PC-9 (cell line): ENCODE measurements at regions of chr9 and their contacts with region 1.

Region 1: DNA sequence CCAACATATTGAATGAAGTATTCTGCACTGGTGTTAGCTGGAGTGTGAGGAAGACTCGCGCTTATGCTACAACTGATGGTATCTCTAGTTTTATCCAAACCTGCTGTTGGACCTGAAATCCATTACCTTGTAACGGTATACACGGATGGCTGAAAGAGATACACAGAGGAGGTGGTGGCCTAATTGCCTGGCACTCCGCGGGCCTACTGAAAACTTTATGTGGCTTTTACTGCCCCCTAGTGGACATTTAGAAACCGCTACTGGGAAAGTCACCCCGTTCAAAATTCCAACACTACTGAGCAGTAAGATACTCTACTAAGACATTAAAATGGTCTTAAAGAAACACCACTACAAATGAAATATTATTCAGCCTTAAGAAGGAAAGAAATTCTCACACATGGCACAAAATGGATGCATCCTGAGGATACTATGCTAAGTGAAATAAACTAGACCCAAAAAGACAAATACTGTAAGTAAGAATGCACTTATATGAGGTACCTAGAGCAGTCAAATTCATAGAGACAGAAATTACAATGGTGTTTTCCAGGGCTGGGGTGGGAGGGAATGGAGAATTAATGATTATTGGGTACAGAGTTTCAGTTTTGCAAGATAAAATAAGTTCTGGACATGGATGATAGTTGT is 100.4 kb downstream of the TTLL11 start:
- DNase-seq: peak; percentile 55
- H3K4me3 ChIP-seq: no peak overlapping the region
- H3K27ac ChIP-seq: no peak overlapping the region
- H3K4me1 ChIP-seq: no peaks in the 10 kb centered on the region
- H3K27me3 ChIP-seq: no peaks in the 10 kb centered on the region
- CTCF ChIP-seq: peak; percentile 88

Region 2: GRCh38 chr9:121621113-121621449 is 371.6 kb before region 1 on chr9:
- CTCF ChIA-PET with region 1: no interaction called
- POLR2A ChIA-PET with region 1: no interaction called
- intact Hi-C with region 1: loop called (anchors 5 kb)
- DNase-seq: peak in 1 of 2 experiments; percentile 39
- H3K4me3 ChIP-seq: no peak overlapping the region
- H3K27ac ChIP-seq: no peak overlapping the region
- H3K4me1 ChIP-seq: no peaks in the 10 kb centered on the region
- H3K27me3 ChIP-seq: no peaks in the 10 kb centered on the region
- CTCF ChIP-seq: peak; percentile 59

Region 3: DNA sequence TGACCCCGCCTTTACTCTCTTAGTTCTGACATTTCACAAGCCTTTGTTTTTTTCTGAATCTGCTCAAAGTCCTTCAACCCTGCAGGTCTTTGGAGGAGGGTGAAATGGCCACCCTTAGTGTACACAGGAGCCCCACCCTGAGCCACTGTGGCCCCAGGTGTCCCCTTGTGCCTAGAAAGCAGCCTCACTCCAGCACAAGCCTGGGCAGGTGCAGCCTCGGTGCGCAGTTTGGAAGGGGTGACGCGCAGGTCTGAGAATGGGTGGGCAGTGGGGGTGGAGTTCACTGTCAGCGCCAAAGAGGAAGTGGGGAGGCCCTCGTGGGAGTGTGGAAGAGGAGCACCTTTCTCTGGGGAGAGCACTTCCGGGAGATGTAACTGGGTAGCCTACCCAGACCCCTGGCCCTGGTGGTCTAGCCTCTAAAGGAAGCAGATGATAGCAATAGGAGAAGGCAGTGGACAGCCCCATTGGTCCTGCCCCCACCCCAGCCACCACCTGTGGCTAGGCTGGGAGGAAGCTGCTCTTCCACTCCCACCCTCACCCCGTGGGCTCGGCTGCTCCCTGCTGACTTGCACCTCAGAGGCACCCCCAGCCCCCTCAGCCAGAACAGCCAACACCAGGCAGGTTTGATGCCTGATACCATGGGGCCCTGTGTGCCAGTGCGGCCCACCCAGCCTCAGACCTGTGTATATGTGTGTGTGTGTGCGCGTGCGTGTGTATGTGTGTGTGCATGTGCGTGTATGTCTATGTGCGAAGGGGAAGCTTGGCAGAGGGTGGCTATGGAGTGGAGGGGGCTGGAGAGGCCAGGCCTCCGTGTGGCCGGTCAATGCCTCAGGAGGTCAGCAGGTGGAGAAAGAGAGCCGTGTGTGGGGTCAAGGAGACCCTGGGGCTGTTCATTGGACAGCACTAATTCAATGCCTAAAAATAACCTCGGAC is 358.1 kb before region 1 on chr9:
- CTCF ChIA-PET with region 1: no interaction called
- POLR2A ChIA-PET with region 1: no interaction called
- intact Hi-C with region 1: loop called (anchors 2 kb)
- DNase-seq: peak in 1 of 2 experiments; percentile 39
- H3K4me3 ChIP-seq: no peak overlapping the region
- H3K27ac ChIP-seq: no peak overlapping the region
- H3K4me1 ChIP-seq: peaks cover 9% of the 10 kb centered on the region; the same call in 1 of the 2 replicates
- H3K27me3 ChIP-seq: no peaks in the 10 kb centered on the region
- CTCF ChIP-seq: peak; percentile 60

Region 4: DNA sequence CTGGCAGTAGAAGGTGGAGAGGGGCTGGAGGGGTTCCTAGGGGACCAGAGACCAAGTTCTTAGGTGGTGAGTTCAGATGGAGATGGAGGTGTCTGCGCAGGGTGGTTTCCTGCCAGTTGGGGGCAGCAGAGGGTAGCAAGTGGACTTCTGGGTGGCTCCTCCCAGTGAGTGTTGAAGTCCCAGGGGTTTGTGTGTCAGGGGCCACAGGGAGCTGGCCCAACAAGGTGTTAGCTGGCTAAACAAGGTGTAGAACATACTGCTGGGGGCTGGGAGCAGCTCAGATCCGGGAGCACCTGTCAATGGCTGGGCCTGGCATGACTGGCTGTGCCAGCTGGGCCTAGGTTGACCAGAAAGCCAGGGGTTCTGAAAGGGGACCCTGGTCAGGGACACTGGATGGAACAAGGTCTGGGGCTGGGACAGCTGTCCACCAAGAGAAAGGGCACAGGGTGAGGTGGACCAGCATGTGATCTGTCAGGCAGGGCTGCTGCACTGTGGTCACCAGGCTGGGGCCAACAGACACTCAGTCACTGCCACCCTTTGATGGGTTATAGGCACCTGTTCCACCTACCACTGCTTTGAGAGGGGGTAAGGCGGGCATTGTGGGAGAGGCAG is 305.7 kb before region 1 on chr9:
- CTCF ChIA-PET with region 1: no interaction called
- POLR2A ChIA-PET with region 1: no interaction called
- intact Hi-C with region 1: loop called (anchors 1 kb)
- DNase-seq: peak; percentile 78 to 87
- H3K4me3 ChIP-seq: no peak overlapping the region
- H3K27ac ChIP-seq: no peak overlapping the region
- H3K4me1 ChIP-seq: peaks cover 9% of the 10 kb centered on the region
- H3K27me3 ChIP-seq: no peaks in the 10 kb centered on the region
- CTCF ChIP-seq: peak; percentile 93

Region 5: DNA sequence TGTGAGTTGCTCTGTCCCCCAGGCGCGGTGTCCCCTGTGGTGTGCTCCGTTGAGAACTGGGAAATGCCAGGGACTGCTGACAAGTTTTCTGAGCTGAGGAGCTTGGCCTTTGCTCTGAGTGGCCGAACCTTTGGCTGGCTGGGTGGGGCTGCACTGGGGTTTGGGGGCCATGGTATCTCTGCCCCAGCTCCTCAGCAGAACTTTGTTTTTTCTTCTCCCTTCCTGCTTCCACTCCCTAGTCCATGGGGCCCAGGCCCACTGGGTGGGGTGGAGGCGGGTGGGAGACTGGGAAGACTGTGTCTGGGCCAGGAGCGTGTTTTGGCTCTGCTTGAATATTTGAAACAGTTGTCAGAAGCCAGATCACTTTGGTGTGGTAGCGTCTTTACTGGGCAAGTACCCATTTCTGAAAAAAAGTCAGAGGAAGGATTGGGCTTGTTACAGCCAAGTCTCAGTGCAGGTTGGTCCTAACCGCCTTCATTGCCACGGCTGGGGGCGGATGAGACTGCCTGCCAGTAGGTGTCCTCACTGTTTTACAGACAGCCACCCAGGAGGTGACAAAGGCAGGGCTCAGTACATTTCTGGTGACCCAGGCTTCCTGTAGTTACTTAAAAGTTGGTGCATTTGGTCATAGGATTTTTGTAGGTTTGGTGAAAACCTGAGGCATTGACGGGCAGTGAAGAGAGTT is 248.5 kb before region 1 on chr9:
- CTCF ChIA-PET with region 1: no interaction called
- POLR2A ChIA-PET with region 1: no interaction called
- intact Hi-C with region 1: loop called (anchors 1 kb)
- DNase-seq: peak in 1 of 2 experiments; percentile 67
- H3K4me3 ChIP-seq: peak overlapping the region; percentile 42; the same call in 1 of the 2 replicates
- H3K27ac ChIP-seq: no peak overlapping the region
- H3K4me1 ChIP-seq: peaks cover 50% of the 10 kb centered on the region
- H3K27me3 ChIP-seq: no peaks in the 10 kb centered on the region
- CTCF ChIP-seq: peak; percentile 56; the same call in 1 of the 2 replicates

Region 6: DNA sequence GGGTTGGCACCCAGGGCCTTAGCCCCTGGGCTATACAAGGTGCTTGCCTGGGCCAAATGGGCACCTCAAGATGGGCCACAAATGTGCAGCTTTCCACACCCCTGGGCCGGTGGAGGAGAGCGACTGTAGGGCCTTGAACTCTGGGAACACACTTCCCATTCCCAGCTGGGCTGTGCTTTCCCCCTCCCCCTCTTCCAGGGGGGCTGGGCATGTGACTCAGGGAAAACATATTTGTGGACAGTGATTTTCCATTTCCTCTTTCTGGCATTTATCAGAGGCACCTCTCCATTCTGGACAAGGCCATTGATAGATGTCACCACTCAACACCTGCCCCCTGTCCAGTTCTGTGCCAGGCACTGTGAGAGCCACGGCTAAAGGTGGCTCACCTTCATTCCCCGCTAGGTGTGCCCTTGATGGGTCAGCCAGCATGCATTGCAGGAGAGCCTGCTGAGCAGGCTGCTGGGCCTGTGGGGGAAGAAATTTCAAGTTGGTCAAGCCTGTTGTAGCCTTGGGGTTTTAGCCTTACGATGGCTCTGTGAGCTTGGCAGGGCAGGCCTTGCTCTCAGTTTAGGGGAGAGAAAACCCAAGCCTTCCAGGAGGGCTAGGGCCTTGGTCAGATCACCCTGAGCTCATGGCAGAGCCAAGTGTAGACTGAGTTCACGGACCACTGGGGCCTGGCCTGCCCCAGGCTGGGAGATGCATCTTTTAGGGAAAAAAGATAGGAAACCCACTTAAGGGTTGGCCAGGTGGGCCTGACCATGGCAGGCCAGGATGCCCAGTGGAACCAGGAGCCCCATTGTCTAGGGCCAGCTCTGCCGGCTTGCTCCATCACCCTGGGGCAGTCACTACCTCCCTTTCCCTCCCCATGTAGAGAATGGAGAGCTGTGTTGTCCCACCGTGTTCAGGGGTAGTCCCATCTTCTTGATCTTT is 227.4 kb before region 1 on chr9:
- CTCF ChIA-PET with region 1: no interaction called
- POLR2A ChIA-PET with region 1: no interaction called
- intact Hi-C with region 1: loop called (anchors 1 kb)
- DNase-seq: peak; percentile 88 to 94
- H3K4me3 ChIP-seq: no peak overlapping the region
- H3K27ac ChIP-seq: peak overlapping the region; percentile 80
- H3K4me1 ChIP-seq: peaks cover 18% of the 10 kb centered on the region
- H3K27me3 ChIP-seq: no peaks in the 10 kb centered on the region
- CTCF ChIP-seq: peak; percentile 57; the same call in 1 of the 2 replicates